ENCODE measurements at regions of chr6 and their contacts with region 1.

Region 1: GRCh38 chr6:23446394-23447046 is 679.5 kb upstream of the NRSN1 start:
- DNase-seq: no peak
- ATAC-seq: peak; percentile 81

Region 2: GRCh38 chr6:22828179-22829062 is 618.1 kb before region 1 on chr6:
- intact Hi-C with region 1: loop called (anchors 5 kb)
- DNase-seq: no peak
- ATAC-seq: peak; percentile 72

Measured in Right ventricle myocardium inferior (tissue), 1 donor.